ENCODE measurements at regions of chr1 and their contacts with region 1.

Region 1: DNA sequence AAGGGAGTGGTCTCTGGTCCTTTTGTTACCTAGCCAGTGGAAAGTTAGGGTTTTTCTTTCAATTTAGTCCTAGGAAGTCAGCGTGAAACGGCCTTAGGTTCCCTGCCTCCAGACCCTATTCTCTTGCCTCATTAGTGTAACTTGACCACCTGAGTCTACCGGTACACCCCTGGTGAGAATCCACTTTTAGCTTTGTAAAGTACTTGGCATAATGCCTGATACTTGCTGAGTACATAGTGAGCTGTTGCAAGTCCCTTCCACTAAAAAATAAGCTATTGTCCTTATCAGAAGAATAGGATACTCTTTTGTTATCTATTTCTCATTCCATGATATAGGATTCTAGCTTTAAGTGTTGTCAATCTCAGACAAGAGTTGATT is 228.8 kb downstream of the ST6GALNAC3 start:
- DNase-seq: no peak
- ATAC-seq: no peak
- H3K4me3 ChIP-seq: no peak overlapping the region
- H3K4me3 Mint-ChIP-seq: no peak overlapping the region
- H3K27ac ChIP-seq: no peak overlapping the region
- H3K27ac Mint-ChIP-seq: no peak overlapping the region
- H3K4me1 ChIP-seq: peaks cover 11 to 35% of the 10 kb centered on the region in 2 experiments
- H3K4me1 Mint-ChIP-seq: peaks cover 30 to 38% (median 37%) of the 10 kb centered on the region in 3 donors
- H3K27me3 ChIP-seq: no peaks in the 10 kb centered on the region
- H3K27me3 Mint-ChIP-seq: no peaks in the 10 kb centered on the region

Region 2: DNA sequence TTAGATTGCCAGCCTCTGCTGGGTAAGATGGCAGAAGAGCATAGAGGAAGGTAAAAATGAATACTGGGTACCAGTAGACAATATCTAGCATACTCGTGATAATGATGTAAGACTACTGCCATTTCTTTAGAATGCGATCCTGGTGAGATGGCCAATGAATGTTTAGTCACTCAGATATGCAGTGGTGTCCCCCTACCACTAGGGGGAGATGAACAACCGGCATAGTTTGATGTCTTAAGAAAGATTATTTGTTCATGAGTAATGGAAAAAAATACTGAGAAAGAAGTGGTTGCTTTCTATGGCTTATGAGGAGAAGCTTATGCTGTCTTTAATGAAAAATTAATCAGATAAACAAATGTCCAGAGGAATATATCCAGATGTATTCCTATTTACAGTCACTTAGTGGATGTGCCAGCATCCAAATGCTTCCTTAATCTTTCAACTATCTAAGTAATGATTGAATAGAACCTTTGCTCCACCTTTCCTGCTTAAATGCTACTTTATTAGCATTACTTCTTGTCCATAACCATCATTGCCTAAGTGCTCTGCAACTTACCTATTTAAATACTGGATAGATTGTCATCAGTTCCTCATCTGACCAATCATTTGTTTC is 27.8 kb after region 1 on chr1:
- CTCF ChIA-PET with region 1: no interaction called
- POLR2A ChIA-PET with region 1: no interaction called
- DNase-seq: peak in 19 of 35 experiments; percentile 2 to 59 (median 14)
- ATAC-seq: peak in 2 of 4 experiments; percentile 57 to 63
- H3K4me3 ChIP-seq: no peak overlapping the region
- H3K4me3 Mint-ChIP-seq: no peak overlapping the region
- H3K27ac ChIP-seq: no peak overlapping the region
- H3K27ac Mint-ChIP-seq: no peak overlapping the region
- H3K4me1 ChIP-seq: peaks cover 0 to 5% of the 10 kb centered on the region in 2 experiments
- H3K4me1 Mint-ChIP-seq: peaks cover 6 to 20% (median 8%) of the 10 kb centered on the region in 3 donors
- H3K27me3 ChIP-seq: no peaks in the 10 kb centered on the region
- H3K27me3 Mint-ChIP-seq: peaks cover 0 to 2% of the 10 kb centered on the region in 2 donors

Region 3: DNA sequence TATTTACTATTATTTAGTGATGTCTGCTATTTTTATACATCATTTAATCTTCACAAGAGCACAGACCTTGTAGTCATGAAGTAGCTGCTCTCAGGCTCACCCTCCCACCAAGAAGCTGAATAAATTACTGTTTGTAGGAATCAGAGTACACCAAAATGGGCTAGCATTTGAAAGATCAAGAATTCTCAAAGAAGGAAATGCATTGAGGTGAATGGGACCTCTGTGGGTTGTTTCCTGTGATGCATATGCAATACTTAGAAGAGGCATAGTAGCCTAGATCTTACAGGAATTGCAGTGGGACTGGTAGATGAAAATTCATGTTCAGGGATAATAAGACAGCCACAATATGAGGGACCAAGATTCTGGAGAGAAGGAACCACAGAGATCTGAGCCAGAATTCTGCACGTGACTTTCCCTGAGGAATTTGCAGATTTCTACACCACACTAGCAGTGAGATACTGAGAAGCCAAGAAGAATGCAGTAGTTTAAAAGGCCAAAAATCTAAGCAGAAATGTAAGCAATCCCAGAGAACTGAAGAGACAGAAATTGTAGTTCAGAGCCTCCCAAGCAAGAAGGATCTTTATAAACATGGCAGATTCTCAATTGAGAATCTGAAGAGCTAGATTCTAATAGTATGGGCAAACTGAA is 78.2 kb after region 1 on chr1:
- CTCF ChIA-PET with region 1: no interaction called
- POLR2A ChIA-PET with region 1: interaction called in 1 of 2 experiments, 11 read pairs
- DNase-seq: no peak
- ATAC-seq: no peak
- H3K4me3 ChIP-seq: no peak overlapping the region
- H3K4me3 Mint-ChIP-seq: no peak overlapping the region
- H3K27ac ChIP-seq: no peak overlapping the region
- H3K27ac Mint-ChIP-seq: no peak overlapping the region
- H3K4me1 ChIP-seq: no peaks in the 10 kb centered on the region
- H3K4me1 Mint-ChIP-seq: no peaks in the 10 kb centered on the region
- H3K27me3 ChIP-seq: no peaks in the 10 kb centered on the region
- H3K27me3 Mint-ChIP-seq: no peaks in the 10 kb centered on the region

Measured in T-cell (primary cell).